ENCODE measurements at regions of chr1 and their contacts with region 1.

Region 1: GRCh38 chr1:17045634-17046333 is 8.0 kb downstream of the SDHB start:
- DNase-seq: peak; percentile 59 to 75 (median 70)
- H3K4me3 ChIP-seq: peak overlapping the region in 2 of 7 experiments; percentile 28 to 52
- H3K27ac ChIP-seq: no peak overlapping the region
- H3K4me1 ChIP-seq: peaks cover 0 to 4% (median 0%) of the 10 kb centered on the region in 4 experiments
- H3K27me3 ChIP-seq: no peaks in the 10 kb centered on the region

Region 2: GRCh38 chr1:16946646-16947045 is 99.1 kb before region 1 on chr1:
- CTCF ChIA-PET with region 1: interaction called, 101 read pairs
- POLR2A ChIA-PET with region 1: no interaction called
- DNase-seq: no peak
- H3K4me3 ChIP-seq: no peak overlapping the region
- H3K27ac ChIP-seq: no peak overlapping the region
- H3K4me1 ChIP-seq: no peaks in the 10 kb centered on the region
- H3K27me3 ChIP-seq: no peaks in the 10 kb centered on the region

Region 3: GRCh38 chr1:17032741-17033140 is 13.0 kb before region 1 on chr1:
- CTCF ChIA-PET with region 1: interaction called, 11 read pairs
- POLR2A ChIA-PET with region 1: no interaction called
- DNase-seq: no peak
- H3K4me3 ChIP-seq: no peak overlapping the region
- H3K27ac ChIP-seq: no peak overlapping the region
- H3K4me1 ChIP-seq: no peaks in the 10 kb centered on the region
- H3K27me3 ChIP-seq: no peaks in the 10 kb centered on the region

Region 4: GRCh38 chr1:17075470-17076255 is 29.9 kb after region 1 on chr1:
- CTCF ChIA-PET with region 1: no interaction called
- POLR2A ChIA-PET with region 1: no interaction called
- DNase-seq: peak in 2 of 3 donors; percentile 40 to 41
- H3K4me3 ChIP-seq: no peak overlapping the region
- H3K27ac ChIP-seq: no peak overlapping the region
- H3K4me1 ChIP-seq: no peaks in the 10 kb centered on the region
- H3K27me3 ChIP-seq: peaks cover 0 to 2% (median 0%) of the 10 kb centered on the region in 5 experiments

Region 5: GRCh38 chr1:17094664-17095063 is 48.9 kb after region 1 on chr1:
- CTCF ChIA-PET with region 1: no interaction called
- POLR2A ChIA-PET with region 1: no interaction called
- DNase-seq: no peak
- H3K4me3 ChIP-seq: no peak overlapping the region
- H3K27ac ChIP-seq: no peak overlapping the region
- H3K4me1 ChIP-seq: peaks cover 0 to 20% (median 3%) of the 10 kb centered on the region in 4 experiments
- H3K27me3 ChIP-seq: peaks cover 0 to 4% (median 0%) of the 10 kb centered on the region in 5 experiments

Measured in common myeloid progenitor, CD34-positive (primary cell).